H1 (cell line): ENCODE measurements at regions of chr7 and their contacts with region 1.

Region 1: GRCh38 chr7:4883374-4884144 is at the start of gene RADIL:
- DNase-seq: peak; percentile 84 to 99
- H3K4me3 ChIP-seq: peak within 1 kb of the TSS; percentile 41 to 63 (median 56)
- H3K27ac ChIP-seq: no peak within 1 kb of the TSS
- H3K4me1 ChIP-seq: peaks cover 0 to 5% (median 2%) of the 10 kb centered on the region in 4 experiments; a peak in 3 of 7 replicates
- H3K27me3 ChIP-seq: peaks cover 0 to 9% (median 2%) of the 10 kb centered on the region in 4 experiments; a peak in 2 of 7 replicates
- CTCF ChIP-seq: peak; percentile 75 to 81 (median 78)
- EP300 ChIP-seq: no peak
- POLR2A ChIP-seq: no peak
- RAD21 ChIP-seq: peak; percentile 62 to 67
- total RNA-seq, gene RADIL: 5.0 and 5.4 TPM in 2 replicates

Region 2: DNA sequence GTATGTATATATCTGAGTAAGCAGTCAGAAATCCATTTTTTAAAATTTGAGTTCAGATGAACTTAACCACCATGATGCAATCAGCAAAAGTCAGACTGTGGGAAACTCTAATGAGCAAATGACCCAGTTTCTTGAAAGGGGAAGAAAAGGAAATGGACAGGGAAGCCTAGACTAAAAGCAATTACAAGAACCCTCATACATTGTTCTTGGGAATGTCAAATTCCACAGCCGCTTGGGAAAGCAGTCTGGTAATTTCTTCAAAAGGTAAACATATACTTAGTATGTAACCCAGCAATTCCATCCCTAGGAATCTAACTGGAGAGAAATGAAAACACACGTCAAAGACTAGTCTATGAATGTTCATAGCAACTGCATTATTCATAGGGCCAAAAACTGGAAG is 217.9 kb before region 1 on chr7:
- CTCF ChIA-PET with region 1: no interaction called
- POLR2A ChIA-PET with region 1: no interaction called
- DNase-seq: no peak
- H3K4me3 ChIP-seq: no peak overlapping the region
- H3K27ac ChIP-seq: no peak overlapping the region
- H3K4me1 ChIP-seq: no peaks in the 10 kb centered on the region; a peak in 1 of 7 replicates
- H3K27me3 ChIP-seq: peaks cover 0 to 2% (median 0%) of the 10 kb centered on the region in 4 experiments; a peak in 1 of 7 replicates
- CTCF ChIP-seq: no peak
- EP300 ChIP-seq: no peak
- POLR2A ChIP-seq: no peak
- RAD21 ChIP-seq: no peak

Region 3: DNA sequence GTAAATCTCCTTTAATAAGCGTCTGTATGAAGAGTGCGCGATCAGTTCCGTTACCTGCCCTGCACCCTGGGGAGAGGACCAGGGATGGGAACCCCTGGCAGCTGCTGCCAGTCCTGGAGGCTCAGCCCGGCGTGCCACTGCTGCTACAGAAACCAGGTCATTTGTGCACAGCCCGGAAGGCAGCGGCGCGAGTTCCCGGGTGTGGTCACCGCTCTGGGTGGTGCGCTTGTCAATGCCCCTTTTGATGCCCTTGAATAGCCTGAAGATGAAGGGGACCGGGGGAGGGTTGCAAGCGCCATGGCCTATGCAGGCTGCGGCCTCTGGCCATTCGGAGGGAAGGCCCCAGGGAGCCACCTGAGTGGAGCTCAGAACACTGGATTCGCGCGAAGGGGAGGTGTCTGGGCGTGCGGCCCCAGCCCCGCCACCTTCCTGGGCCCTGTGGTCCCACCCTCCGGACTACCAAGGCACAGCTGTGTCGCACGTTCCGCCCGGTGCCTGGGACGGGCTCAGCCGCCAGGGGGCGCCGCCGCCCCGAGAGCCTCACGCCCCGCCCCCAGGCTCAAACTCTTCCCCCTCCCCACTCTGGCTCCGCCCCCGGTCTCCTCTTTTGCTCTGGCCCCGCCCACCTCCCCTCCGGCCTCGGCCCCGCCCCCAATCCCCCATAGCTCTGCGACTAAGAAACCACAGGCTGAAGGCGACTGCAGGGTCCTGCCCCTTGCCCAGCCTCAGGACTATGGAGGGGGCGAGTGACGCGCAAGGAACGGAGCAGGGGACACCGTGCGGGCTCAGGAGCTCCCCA is 91.6 kb before region 1 on chr7:
- CTCF ChIA-PET with region 1: interaction called, 16 read pairs
- POLR2A ChIA-PET with region 1: no interaction called
- DNase-seq: peak; percentile 83 to 99
- H3K4me3 ChIP-seq: peak overlapping the region; percentile 46 to 71 (median 52)
- H3K27ac ChIP-seq: 0 out of 2 replicates have a peak overlapping the region, but pooled peaks have one; percentile 27
- H3K4me1 ChIP-seq: peaks cover 0 to 3% (median 1%) of the 10 kb centered on the region in 4 experiments; a peak in 4 of 7 replicates
- H3K27me3 ChIP-seq: no peaks in the 10 kb centered on the region
- CTCF ChIP-seq: peak in 2 of 3 experiments; percentile 79 to 83; a peak in 3 of 4 replicates
- EP300 ChIP-seq: no peak
- POLR2A ChIP-seq: no peak
- RAD21 ChIP-seq: peak; percentile 33 to 47; a peak in 2 of 4 replicates

Region 4: GRCh38 chr7:4830176-4830575 is 53.4 kb before region 1 on chr7:
- CTCF ChIA-PET with region 1: interaction called, 47 read pairs
- POLR2A ChIA-PET with region 1: no interaction called
- DNase-seq: peak; percentile 73 to 85
- H3K4me3 ChIP-seq: no peak overlapping the region
- H3K27ac ChIP-seq: no peak overlapping the region
- H3K4me1 ChIP-seq: no peaks in the 10 kb centered on the region
- H3K27me3 ChIP-seq: no peaks in the 10 kb centered on the region
- CTCF ChIP-seq: peak; percentile 98 to 100 (median 100)
- EP300 ChIP-seq: 0 out of 3 replicates have a peak, but pooled peaks of 1 of the 2 experiments have one; percentile 21
- POLR2A ChIP-seq: no peak
- RAD21 ChIP-seq: peak; percentile 85 to 89

Region 5: GRCh38 chr7:4849369-4849768 is 34.2 kb before region 1 on chr7:
- CTCF ChIA-PET with region 1: interaction called, 39 read pairs
- POLR2A ChIA-PET with region 1: no interaction called
- DNase-seq: no peak
- H3K4me3 ChIP-seq: no peak overlapping the region
- H3K27ac ChIP-seq: no peak overlapping the region
- H3K4me1 ChIP-seq: no peaks in the 10 kb centered on the region
- H3K27me3 ChIP-seq: no peaks in the 10 kb centered on the region
- CTCF ChIP-seq: 0 out of 4 replicates have a peak, but pooled peaks of 1 of the 3 experiments have one; percentile 11
- EP300 ChIP-seq: no peak
- POLR2A ChIP-seq: no peak
- RAD21 ChIP-seq: peak; percentile 14 to 29; a peak in 2 of 4 replicates

Region 6: GRCh38 chr7:4895766-4896165 is 12.2 kb after region 1 on chr7:
- CTCF ChIA-PET with region 1: interaction called, 16 read pairs
- POLR2A ChIA-PET with region 1: interaction called, 5 read pairs
- DNase-seq: no peak
- H3K4me3 ChIP-seq: no peak overlapping the region
- H3K27ac ChIP-seq: no peak overlapping the region
- H3K4me1 ChIP-seq: no peaks in the 10 kb centered on the region; a peak in 1 of 7 replicates
- H3K27me3 ChIP-seq: no peaks in the 10 kb centered on the region
- CTCF ChIP-seq: no peak
- EP300 ChIP-seq: no peak
- POLR2A ChIP-seq: no peak
- RAD21 ChIP-seq: no peak